Activated CD4-positive, alpha-beta T cell treated with anti-CD3 and anti-CD28 coated beads for 36 hours (primary cell): ENCODE measurements at regions of chr3 and their contacts with region 1.

Region 1: DNA sequence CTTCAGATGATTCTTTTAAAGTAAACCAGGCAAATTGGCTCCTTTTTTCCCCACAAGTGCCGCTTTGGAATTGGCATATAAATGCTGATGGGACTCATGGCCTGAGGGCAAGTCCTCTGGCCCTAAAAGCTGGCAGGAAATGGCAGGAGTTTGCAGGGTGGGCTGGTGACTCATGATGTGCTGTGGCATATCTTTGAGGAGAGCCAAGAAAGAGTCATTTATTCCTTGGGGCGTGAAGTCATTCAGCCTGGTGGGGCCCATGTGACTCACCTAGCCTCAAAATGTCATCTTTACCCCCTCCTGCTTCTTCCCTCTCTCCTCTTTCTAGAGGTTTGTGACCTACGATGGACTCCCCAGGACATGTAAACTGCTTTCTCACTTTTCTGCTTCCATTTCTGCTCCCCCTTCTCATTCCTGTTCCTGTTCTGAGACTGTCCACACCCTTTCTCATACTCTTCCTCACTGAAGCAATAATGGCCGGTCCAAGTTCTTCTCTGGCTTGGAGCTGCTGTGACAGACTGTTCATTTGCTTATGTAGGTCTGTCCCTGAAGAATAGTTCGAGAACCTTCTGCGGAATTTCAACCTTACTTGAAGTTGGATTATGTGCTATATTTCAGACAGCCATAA is 326.1 kb downstream of the SATB1 start:
- DNase-seq: peak; percentile 82
- ATAC-seq: peak; percentile 94
- H3K4me3 Mint-ChIP-seq: peak overlapping the region; percentile 5
- H3K27ac Mint-ChIP-seq: peak overlapping the region; percentile 83
- H3K4me1 Mint-ChIP-seq: peaks cover 24% of the 10 kb centered on the region
- H3K27me3 Mint-ChIP-seq: peaks cover 7% of the 10 kb centered on the region

Region 2: GRCh38 chr3:18111796-18112232 is 12.7 kb after region 1 on chr3:
- CTCF ChIA-PET with region 1: interaction called, 3 read pairs
- POLR2A ChIA-PET with region 1: no interaction called
- intact Hi-C with region 1: loop called in 1 of 2 experiments (anchors 1 kb)
- DNase-seq: peak; percentile 13
- ATAC-seq: peak; percentile 70
- H3K4me3 Mint-ChIP-seq: peak overlapping the region; percentile 33
- H3K27ac Mint-ChIP-seq: peak overlapping the region; percentile 19
- H3K4me1 Mint-ChIP-seq: peaks cover 7% of the 10 kb centered on the region
- H3K27me3 Mint-ChIP-seq: no peaks in the 10 kb centered on the region